IMR-90 (cell line): ENCODE measurements at regions of chr3 and their contacts with region 1.

Region 1: DNA sequence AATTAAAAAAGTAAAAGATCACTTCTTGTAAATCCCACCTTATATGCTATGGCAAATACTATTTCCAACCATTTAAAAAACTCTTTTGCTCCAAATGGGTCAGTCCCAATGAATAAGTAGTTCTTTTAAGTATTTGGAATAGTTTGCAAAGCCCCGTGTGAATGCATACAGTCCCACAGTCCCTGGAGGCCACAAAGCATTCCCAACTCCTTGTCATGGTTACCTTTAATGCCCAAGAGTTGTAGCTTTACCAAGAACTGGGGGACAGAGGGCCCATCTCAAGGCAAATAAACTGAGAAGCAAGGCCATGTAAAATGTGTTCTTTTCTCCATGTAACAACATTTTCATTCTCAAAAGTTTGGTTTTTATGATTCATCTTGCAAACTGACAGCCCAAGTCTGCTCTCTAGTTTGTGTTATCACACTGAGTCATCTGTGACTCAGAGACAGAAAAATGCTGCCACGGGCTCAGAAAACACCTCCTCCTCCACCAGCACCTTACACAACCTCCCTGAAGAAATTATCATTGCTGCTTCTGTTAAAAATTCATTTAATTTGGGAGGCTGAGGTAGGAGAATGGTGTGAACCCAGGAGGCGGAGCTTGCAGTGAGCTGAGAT is 336.2 kb downstream of the ERC2 start:
- DNase-seq: peak; percentile 95
- ATAC-seq: peak; percentile 88
- H3K4me3 ChIP-seq: no peak overlapping the region
- H3K27ac ChIP-seq: peak overlapping the region; percentile 80; the same call in 1 of the 2 replicates
- H3K4me1 ChIP-seq: peaks cover 3% of the 10 kb centered on the region
- H3K27me3 ChIP-seq: peaks cover 6% of the 10 kb centered on the region
- CTCF ChIP-seq: no peak
- POLR2A ChIP-seq: no peak
- RAD21 ChIP-seq: no peak

Region 2: DNA sequence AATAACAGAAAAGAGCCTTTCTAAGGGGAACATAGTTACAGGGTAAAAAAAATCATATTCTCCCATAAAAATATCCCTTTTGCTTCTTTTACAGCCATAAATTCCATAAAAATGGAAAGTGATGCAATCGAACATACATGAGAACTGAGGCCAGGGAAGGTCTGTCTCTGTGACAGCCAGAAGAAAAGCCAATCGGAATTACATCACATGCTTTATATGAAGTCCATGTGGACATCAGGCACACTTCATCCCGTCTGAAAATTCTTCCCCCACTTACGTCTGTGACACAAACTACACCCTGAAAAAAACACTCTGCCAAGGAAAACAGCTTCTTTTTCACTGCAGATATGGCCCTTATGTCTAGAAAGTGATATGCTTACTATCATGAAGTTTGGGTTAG is 12.7 kb after region 1 on chr3:
- CTCF ChIA-PET with region 1: no interaction called
- POLR2A ChIA-PET with region 1: no interaction called
- dilution Hi-C with region 1: no loop called
- in situ Hi-C with region 1: no loop called
- intact Hi-C with region 1: loop called (anchors 1 kb)
- DNase-seq: no peak
- ATAC-seq: no peak
- H3K4me3 ChIP-seq: no peak overlapping the region
- H3K27ac ChIP-seq: no peak overlapping the region
- H3K4me1 ChIP-seq: no peaks in the 10 kb centered on the region
- H3K27me3 ChIP-seq: peaks cover 2% of the 10 kb centered on the region
- CTCF ChIP-seq: no peak
- POLR2A ChIP-seq: no peak
- RAD21 ChIP-seq: no peak

Region 3: GRCh38 chr3:57268416-57268815 is 1136.3 kb after region 1 on chr3:
- CTCF ChIA-PET with region 1: no interaction called
- POLR2A ChIA-PET with region 1: no interaction called
- dilution Hi-C with region 1: no loop called
- in situ Hi-C with region 1: no loop called
- intact Hi-C with region 1: loop called (anchors 5 kb)
- DNase-seq: peak; percentile 28
- ATAC-seq: no peak
- H3K4me3 ChIP-seq: no peak overlapping the region
- H3K27ac ChIP-seq: no peak overlapping the region
- H3K4me1 ChIP-seq: no peaks in the 10 kb centered on the region
- H3K27me3 ChIP-seq: no peaks in the 10 kb centered on the region
- CTCF ChIP-seq: no peak
- POLR2A ChIP-seq: no peak
- RAD21 ChIP-seq: no peak